Common myeloid progenitor, CD34-positive (primary cell): ENCODE measurements at regions of chr13 and their contacts with region 1.

Region 1: DNA sequence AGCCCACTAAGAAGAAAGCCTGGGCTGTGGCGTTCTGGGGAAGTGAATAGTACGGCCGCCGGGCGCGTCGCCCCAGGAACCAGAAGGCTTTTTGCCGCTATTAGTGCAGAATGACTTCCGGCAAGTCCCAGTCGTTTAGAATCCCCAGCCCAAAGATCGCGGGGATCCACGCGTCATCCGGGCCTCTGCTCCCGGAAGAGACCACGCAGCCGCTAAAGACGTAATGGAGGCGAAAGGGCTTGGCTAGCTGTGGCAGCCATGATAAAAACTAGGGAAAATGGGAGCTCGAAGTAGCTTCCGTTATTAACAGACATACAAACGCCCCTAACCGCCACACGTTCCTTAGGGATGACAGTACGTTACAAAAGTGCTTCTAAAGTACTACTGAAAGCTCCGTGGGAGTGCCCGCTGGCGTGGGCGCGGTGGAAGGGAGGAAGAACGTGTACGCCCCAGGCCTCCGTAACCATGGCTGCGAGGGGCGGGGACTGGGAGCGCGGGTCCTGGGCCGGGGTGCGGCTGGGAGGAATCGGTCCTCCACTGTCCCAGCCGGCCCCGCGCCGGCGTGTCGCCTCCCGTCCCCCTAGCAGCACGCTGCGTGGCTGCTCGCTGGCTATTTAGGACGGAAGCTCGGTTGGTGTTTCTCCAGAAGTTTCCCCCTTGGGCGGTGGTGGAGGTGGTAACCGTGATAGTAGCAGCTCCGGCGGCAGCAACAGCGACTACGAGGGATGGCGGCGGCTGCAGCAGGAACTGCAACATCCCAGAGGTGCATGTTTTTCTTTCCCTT is at the start of gene SUGT1:
- DNase-seq: peak; percentile 98 to 100 (median 99)
- H3K4me3 ChIP-seq: peak within 1 kb of the TSS; percentile 87 to 98 (median 93)
- H3K27ac ChIP-seq: peak within 1 kb of the TSS; percentile 99 to 100
- H3K4me1 ChIP-seq: peaks cover 15 to 28% (median 17%) of the 10 kb centered on the region in 4 experiments
- H3K27me3 ChIP-seq: no peaks in the 10 kb centered on the region

Region 2: GRCh38 chr13:52617070-52618060 is 35.0 kb before region 1 on chr13:
- CTCF ChIA-PET with region 1: interaction called, 8 read pairs
- POLR2A ChIA-PET with region 1: interaction called, 15 read pairs
- DNase-seq: peak; percentile 88 to 93 (median 91)
- H3K4me3 ChIP-seq: peak overlapping the region; percentile 90 to 99 (median 96)
- H3K27ac ChIP-seq: peak overlapping the region; percentile 22 to 84
- H3K4me1 ChIP-seq: peaks cover 4 to 22% (median 7%) of the 10 kb centered on the region in 4 experiments
- H3K27me3 ChIP-seq: no peaks in the 10 kb centered on the region